CD8-positive, alpha-beta T cell (primary cell): ENCODE measurements at regions of chr2 and their contacts with region 1.

Region 1: DNA sequence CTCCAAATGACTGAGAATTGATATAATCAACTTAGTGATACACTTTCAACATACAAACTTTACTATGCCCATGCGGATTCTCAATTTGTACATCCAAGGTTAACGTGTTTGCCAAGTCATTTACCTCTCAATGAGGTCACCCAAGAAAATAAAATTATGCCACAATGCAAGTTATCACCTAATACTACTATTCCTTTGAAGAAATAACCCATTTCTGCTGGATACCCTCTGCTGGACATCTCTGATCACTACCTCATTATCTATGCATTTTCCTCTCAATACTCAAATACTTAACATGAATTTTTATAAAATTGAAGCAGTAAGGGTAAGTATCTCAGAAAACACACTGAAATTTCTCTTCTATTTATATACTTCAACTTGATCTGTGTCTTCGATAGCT is 12.7 kb downstream of the HNRNPLL start:
- DNase-seq: peak in 1 of 9 experiments; percentile 43
- ATAC-seq: no peak
- H3K4me3 ChIP-seq: no peak overlapping the region
- H3K4me3 Mint-ChIP-seq: no peak overlapping the region
- H3K27ac ChIP-seq: peak overlapping the region in 1 of 2 experiments; percentile 6
- H3K27ac Mint-ChIP-seq: no peak overlapping the region
- H3K4me1 ChIP-seq: no peaks in the 10 kb centered on the region
- H3K4me1 Mint-ChIP-seq: peaks cover 26% of the 10 kb centered on the region
- H3K27me3 ChIP-seq: no peaks in the 10 kb centered on the region
- H3K27me3 Mint-ChIP-seq: no peaks in the 10 kb centered on the region
- CTCF ChIP-seq: no peak

Region 2: DNA sequence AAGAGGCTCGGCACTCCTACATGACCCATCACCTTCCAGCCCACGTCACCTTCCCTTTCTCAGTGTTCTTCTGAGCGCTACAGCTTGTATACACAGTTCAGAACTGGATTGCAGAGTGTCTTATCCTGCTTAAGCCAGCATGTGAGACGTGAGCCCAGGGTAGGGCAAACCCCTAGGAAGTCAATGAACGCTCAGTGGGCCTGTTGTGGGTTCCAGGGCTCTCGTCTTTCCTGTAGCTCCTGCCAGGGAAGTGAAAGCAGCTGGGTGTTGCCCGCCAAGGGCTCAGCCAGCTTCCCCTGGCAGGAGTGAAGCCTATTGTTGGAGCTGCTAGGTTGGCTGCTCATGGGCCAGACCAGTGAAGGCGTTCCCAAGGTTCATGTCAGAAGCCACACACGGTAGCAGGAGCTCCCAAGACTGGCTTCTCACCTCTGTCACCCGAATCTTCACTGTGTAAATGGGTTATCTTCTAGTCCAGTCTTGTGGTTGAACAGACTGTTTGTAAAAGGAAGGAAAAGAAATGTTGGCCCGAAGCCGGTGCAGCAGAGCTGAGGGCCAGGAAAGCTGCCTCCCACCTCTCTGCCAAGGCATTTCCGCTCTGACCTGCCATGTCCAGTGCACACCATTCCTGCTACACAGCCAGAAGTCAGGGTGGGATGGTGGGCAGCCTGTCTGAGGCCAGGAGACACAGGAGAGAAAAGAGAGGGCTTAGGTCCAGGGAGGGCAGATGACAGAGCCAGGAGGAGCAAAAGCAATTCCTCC is 734.6 kb before region 1 on chr2:
- CTCF ChIA-PET with region 1: no interaction called
- POLR2A ChIA-PET with region 1: no interaction called
- intact Hi-C with region 1: no loop called
- DNase-seq: no peak
- ATAC-seq: no peak
- H3K4me3 ChIP-seq: no peak overlapping the region
- H3K4me3 Mint-ChIP-seq: no peak overlapping the region
- H3K27ac ChIP-seq: no peak overlapping the region
- H3K27ac Mint-ChIP-seq: no peak overlapping the region
- H3K4me1 ChIP-seq: peaks cover 13% of the 10 kb centered on the region
- H3K4me1 Mint-ChIP-seq: peaks cover 6% of the 10 kb centered on the region
- H3K27me3 ChIP-seq: no peaks in the 10 kb centered on the region
- H3K27me3 Mint-ChIP-seq: peaks cover 5% of the 10 kb centered on the region
- CTCF ChIP-seq: no peak

Region 3: GRCh38 chr2:38554973-38555595 is 35.0 kb before region 1 on chr2:
- CTCF ChIA-PET with region 1: no interaction called
- POLR2A ChIA-PET with region 1: no interaction called
- intact Hi-C with region 1: no loop called
- DNase-seq: peak in 1 of 9 experiments; percentile 13
- ATAC-seq: no peak
- H3K4me3 ChIP-seq: no peak overlapping the region
- H3K4me3 Mint-ChIP-seq: no peak overlapping the region
- H3K27ac ChIP-seq: no peak overlapping the region
- H3K27ac Mint-ChIP-seq: no peak overlapping the region
- H3K4me1 ChIP-seq: no peaks in the 10 kb centered on the region
- H3K4me1 Mint-ChIP-seq: peaks cover 3% of the 10 kb centered on the region
- H3K27me3 ChIP-seq: no peaks in the 10 kb centered on the region
- H3K27me3 Mint-ChIP-seq: no peaks in the 10 kb centered on the region
- CTCF ChIP-seq: peak; percentile 18

Region 4: DNA sequence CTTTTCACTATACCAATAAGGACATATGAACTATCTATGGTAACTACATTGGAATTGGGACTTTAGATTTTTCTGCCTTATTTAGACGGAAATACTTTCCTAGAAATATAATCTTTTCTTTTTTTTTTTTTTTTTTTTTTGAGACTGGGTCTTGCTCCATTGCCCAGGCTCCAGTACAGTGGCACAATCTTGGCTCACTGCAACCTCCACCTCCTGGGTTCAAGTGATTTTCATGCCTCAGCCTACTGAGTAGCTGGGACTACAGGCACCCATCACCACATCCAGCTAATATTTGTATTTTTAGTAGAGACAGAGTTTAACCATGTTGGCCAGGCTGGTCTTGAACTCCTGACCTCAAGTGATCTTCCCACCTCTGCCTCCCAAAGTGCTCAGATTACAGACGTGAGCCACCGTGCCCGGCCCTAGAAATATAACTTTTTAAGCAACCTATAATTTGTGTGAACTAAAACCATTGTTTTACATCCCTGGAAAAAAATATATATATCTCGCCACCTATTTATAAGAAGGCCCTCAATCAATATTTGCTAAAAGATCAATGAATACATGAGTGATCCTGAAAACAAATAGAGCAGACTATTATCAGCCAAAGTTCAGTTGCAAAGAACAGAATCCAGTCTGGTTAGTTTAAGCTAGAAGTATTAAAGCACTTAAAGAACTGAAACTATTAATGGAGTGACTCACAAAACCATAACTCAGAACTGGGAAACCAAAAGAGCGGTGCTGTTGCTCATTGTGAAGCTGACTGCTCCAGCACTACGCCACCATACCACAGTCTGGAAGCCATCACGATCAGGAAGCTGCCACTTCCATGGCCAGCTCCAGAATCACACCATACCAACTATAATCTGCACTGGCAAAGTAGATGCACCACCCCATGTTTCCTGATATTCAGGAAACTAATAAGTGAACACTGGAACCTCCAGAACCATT is 21.1 kb after region 1 on chr2:
- CTCF ChIA-PET with region 1: no interaction called
- POLR2A ChIA-PET with region 1: interaction called, 4 read pairs
- intact Hi-C with region 1: loop called in 1 of 2 experiments (anchors 1 kb)
- DNase-seq: peak in 2 of 9 experiments; percentile 32 to 48
- ATAC-seq: no peak
- H3K4me3 ChIP-seq: no peak overlapping the region
- H3K4me3 Mint-ChIP-seq: no peak overlapping the region
- H3K27ac ChIP-seq: no peak overlapping the region
- H3K27ac Mint-ChIP-seq: no peak overlapping the region
- H3K4me1 ChIP-seq: no peaks in the 10 kb centered on the region
- H3K4me1 Mint-ChIP-seq: peaks cover 21% of the 10 kb centered on the region
- H3K27me3 ChIP-seq: no peaks in the 10 kb centered on the region
- H3K27me3 Mint-ChIP-seq: peaks cover under 1% of the 10 kb centered on the region
- CTCF ChIP-seq: no peak